ENCODE measurements at regions of chr11 and their contacts with region 1.

Region 1: DNA sequence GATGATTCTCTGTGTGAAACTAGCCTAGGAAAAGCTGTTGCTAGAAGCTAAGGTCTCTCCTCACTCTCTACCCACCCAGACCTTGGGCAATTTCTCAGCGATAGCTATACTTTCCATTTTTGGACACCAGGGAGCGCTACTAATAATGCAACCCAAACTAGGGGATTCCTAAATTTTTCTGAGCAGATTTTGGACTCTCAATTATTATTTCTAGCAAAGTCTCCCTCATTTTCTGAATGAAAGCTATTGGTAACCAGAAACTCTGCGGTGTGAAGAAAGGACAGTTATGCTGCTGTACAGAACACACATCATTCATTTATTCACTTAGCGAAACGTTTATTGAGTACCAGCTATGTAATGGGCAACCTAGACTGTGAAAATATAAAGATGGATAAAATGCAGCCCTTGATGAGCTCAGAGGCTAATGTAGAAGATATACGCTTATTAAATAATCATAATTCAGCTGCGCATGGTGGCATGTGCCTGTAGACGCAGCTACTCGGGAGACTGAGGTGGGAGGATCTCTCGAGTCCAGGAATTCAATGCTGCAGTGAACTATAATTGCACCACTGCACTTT is 6.1 kb upstream of the STIM1 start:
- DNase-seq: peak; percentile 67
- H3K4me3 ChIP-seq: no peak overlapping the region
- H3K27ac ChIP-seq: no peak overlapping the region
- H3K4me1 ChIP-seq: no peaks in the 10 kb centered on the region
- H3K27me3 ChIP-seq: no peaks in the 10 kb centered on the region

Region 2: DNA sequence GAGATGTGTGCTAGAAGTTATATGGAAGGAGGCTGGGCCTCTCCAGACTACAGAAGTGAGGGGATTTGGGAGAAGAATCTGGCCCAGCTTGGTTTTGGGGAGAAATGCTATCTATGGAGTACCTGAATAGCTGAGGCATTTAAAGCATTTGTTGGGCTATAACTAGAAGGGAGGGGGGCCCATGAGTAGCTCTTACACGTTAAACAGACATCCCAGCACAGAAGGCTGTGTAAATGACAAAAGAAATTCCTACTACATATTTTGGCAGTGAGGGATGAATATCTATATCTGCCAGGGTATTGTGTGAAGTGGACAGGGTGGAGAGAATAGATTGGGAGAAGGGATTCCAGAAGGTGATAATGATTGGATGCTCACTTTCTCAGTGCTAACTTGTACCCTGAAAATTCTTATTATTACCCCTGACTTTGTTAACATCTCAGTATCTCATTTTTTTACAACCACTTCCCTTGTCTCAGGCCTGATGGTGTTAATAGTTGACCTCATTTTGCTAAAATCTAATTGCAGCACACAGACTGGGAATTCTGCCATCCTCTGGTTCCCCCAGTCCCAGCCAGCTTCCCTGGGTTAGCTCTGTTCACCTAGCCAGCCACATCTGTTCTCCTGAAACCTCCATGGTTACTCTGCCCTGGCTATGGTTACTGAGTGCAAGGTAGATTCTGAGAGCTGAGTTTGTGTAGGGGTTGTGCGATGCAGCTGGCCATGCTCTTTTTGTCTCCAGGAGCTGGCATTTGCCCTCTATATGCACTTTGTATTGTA is 216.4 kb after region 1 on chr11:
- in situ Hi-C with region 1: loop called (anchors 5 kb)
- DNase-seq: peak; percentile 26
- H3K4me3 ChIP-seq: no peak overlapping the region
- H3K27ac ChIP-seq: no peak overlapping the region
- H3K4me1 ChIP-seq: peaks cover 10% of the 10 kb centered on the region
- H3K27me3 ChIP-seq: no peaks in the 10 kb centered on the region